Activated CD8-positive, alpha-beta T cell treated with anti-CD3 and anti-CD28 coated beads for 36 hours (primary cell): ENCODE measurements at regions of chr22 and their contacts with region 1.

Region 1: GRCh38 chr22:46587492-46588278 is 32.5 kb upstream of the GRAMD4 start:
- DNase-seq: peak; percentile 66
- ATAC-seq: peak; percentile 45
- H3K4me3 Mint-ChIP-seq: peak overlapping the region; percentile 4
- H3K27ac Mint-ChIP-seq: peak overlapping the region; percentile 67
- H3K4me1 Mint-ChIP-seq: peaks cover 36% of the 10 kb centered on the region
- H3K27me3 Mint-ChIP-seq: no peaks in the 10 kb centered on the region
- CTCF ChIP-seq: no peak

Region 2: GRCh38 chr22:46622081-46622521 is 34.4 kb after region 1 on chr22:
- CTCF ChIA-PET with region 1: no interaction called
- POLR2A ChIA-PET with region 1: no interaction called
- intact Hi-C with region 1: no loop called
- DNase-seq: no peak
- ATAC-seq: no peak
- H3K4me3 Mint-ChIP-seq: no peak overlapping the region
- H3K27ac Mint-ChIP-seq: no peak overlapping the region
- H3K4me1 Mint-ChIP-seq: no peaks in the 10 kb centered on the region
- H3K27me3 Mint-ChIP-seq: no peaks in the 10 kb centered on the region
- CTCF ChIP-seq: no peak

Region 3: DNA sequence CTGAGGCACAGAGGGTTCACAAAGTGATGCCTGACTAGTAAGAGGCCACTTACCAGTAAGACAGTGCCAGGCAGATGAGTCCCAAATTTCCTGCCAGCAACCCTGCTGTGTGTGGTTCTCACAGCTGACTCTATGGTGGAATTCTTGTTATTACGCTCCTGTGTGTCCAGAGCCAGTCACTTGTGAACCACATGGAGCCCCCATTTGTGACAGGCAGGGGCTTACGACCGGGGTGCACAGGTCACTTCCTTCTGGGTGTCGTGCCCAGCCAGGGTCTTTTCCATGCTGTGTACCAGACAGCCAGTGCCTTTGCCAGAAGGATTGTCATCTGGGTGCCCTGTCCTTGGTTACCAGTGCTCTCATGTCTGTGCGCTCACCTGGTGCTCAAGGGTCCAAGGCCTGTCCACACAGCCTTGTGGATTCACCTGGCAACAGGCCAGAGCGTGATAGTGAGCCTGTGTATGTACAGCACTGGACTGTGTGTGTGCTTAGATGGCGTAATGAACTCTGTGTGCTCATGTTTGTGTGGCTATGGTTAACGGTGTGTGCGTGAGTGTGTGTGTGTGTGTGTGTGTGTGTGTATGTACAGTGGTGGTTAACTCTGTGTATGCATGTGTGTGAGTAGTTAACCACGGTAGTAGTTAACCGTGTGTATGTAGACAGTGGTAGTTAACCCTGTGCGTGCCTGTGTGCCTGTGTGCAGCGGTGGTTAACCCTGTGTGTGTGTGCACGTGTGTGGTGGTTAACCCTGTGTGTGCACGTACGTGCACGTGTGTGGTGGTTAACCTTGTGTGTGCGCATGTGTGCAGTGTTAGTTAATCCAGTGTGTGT is 51.1 kb after region 1 on chr22:
- CTCF ChIA-PET with region 1: no interaction called
- POLR2A ChIA-PET with region 1: no interaction called
- intact Hi-C with region 1: no loop called
- DNase-seq: no peak
- ATAC-seq: no peak
- H3K4me3 Mint-ChIP-seq: no peak overlapping the region
- H3K27ac Mint-ChIP-seq: no peak overlapping the region
- H3K4me1 Mint-ChIP-seq: no peaks in the 10 kb centered on the region
- H3K27me3 Mint-ChIP-seq: no peaks in the 10 kb centered on the region
- CTCF ChIP-seq: no peak

Region 4: DNA sequence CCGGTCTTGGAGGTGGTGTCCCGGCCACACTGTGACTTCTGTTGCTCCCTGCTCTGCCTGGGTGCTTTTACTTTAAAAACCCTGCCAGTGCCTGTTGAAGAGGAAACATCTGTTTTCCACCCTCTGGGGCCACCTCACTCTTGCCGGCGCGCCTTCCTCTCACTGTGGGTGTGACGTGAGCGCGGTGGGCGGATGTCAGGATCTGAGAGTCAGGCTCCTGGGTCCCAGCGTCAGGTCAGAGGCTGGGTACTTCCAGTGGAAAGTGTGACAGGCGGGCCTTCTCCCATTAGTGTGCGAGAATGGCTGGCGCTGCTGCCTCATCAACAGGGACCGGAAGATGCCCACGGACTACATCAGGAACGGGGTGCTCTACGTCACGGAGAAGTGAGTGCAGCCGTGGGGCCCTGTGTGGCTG is 86.7 kb after region 1 on chr22:
- CTCF ChIA-PET with region 1: no interaction called
- POLR2A ChIA-PET with region 1: no interaction called
- intact Hi-C with region 1: loop called (anchors 10 kb)
- DNase-seq: peak; percentile 100
- ATAC-seq: peak; percentile 91
- H3K4me3 Mint-ChIP-seq: peak overlapping the region; percentile 85
- H3K27ac Mint-ChIP-seq: peak overlapping the region; percentile 95
- H3K4me1 Mint-ChIP-seq: peaks cover 44% of the 10 kb centered on the region
- H3K27me3 Mint-ChIP-seq: no peaks in the 10 kb centered on the region
- CTCF ChIP-seq: no peak